AG04449 (cell line): ENCODE measurements at regions of chr11 and their contacts with region 1.

Region 1: DNA sequence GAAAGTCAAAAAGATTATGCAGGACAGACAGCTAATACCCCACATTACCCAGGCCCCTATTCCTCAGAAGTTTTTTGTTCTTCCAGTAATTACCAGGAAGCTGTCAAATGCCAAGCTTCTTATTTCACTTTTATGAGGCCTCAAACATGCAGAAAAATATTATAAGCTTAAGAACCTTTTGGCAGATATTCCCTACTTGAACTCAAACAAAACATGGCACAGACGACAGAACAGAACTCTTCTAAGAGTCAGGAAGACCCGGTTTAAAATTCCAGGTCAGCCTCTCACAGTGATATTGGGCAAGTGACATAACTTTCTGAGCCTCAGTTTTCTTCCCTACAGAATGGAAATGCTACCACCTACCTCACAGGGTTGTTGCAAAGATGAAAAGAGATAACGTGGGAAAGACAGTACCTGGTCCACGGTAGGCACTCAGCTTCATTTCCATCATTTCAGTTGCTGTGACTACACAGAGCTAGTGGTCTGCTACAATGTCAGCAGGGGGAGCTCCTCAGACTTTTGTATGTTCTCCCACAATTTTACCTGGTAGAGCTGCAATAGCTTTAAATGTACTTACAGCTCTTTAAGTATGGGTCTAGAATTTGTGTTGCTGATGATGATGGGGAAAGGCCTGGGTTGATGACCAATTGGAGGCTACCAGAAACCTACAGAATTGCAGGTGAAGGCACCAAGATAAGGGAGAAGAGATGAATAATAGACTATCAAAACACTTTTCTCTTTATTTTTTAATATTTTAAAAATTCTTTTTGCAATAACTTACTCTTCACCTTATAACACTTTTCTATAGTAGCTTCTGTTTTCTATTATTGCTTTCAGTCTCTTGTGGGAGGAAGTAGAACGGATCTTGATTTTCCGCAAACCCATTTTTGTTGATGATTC is 98.3 kb upstream of the CHRM4 start:
- DNase-seq: no peak
- H3K4me3 ChIP-seq: no peak overlapping the region
- CTCF ChIP-seq: peak; percentile 58

Region 2: DNA sequence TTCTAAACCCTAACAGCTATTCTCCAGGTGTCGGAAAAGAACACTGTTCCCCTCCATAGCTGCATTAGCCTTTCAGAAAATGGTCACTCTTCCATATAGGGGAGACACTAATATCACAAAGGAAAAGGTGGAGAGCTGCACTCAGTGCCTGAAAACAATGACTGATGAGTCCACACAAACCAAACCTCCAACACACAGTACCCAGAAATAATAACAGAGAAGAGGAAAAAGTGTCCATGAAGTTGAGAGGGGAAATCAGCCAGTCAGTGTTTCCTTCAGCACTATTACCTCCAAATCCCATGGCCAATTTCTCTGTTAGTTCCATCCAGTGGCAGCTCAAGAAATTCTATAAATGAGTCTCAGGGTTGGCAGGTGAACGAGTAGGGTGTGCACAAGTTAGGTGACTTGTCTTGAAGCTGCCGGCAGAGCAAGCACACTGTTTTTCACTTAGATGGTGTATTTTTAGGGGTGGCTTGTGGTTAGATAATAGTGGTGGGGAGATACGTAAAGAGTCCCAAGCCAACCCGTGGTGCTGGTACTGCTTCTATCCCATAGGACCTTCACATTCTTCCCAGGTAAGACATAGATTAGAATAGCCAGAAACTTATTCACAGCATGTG is 13.9 kb before region 1 on chr11:
- CTCF ChIA-PET with region 1: interaction called, 75 read pairs
- POLR2A ChIA-PET with region 1: no interaction called
- DNase-seq: no peak
- H3K4me3 ChIP-seq: no peak overlapping the region
- CTCF ChIP-seq: no peak

Region 3: GRCh38 chr11:46504817-46505613 is 15.1 kb after region 1 on chr11:
- CTCF ChIA-PET with region 1: interaction called, 33 read pairs
- POLR2A ChIA-PET with region 1: no interaction called
- DNase-seq: peak; percentile 16
- H3K4me3 ChIP-seq: no peak overlapping the region
- CTCF ChIP-seq: no peak